ENCODE measurements at regions of chr1 and their contacts with region 1.

Region 1: DNA sequence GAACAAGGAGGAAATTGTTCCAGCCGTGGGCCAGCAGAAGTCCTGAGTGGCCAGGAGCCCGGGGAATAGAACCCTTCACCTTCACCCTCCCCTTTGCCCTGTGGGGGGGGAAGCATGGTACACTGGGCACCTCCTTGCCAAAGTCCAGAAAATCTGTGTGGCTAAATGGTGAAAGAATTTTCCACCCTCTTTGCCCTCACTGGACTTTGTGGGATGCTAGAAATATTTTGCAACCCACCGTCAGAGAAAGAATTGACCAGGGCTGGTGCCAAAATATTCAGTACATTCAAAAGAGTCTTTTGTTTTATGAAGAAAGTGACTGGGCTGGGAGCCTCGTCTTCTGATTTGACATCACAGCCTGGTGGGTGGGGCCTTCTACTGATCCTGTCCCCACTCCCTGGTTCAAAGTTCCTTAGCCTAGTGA is 14.6 kb downstream of the NFASC start:
- DNase-seq: no peak
- H3K4me3 ChIP-seq: no peak overlapping the region
- H3K27ac ChIP-seq: no peak overlapping the region
- H3K4me1 ChIP-seq: peaks cover 0 to 10% of the 10 kb centered on the region in 2 donors
- H3K27me3 ChIP-seq: no peaks in the 10 kb centered on the region
- CTCF ChIP-seq: no peak

Region 2: GRCh38 chr1:203839059-203839458 is 1046.2 kb before region 1 on chr1:
- intact Hi-C with region 1: no loop called
- DNase-seq: no peak
- H3K4me3 ChIP-seq: no peak overlapping the region
- H3K27ac ChIP-seq: no peak overlapping the region
- H3K4me1 ChIP-seq: peaks cover 0 to 6% of the 10 kb centered on the region in 2 donors
- H3K27me3 ChIP-seq: no peaks in the 10 kb centered on the region
- CTCF ChIP-seq: no peak

Region 3: GRCh38 chr1:204819495-204819894 is 65.8 kb before region 1 on chr1:
- intact Hi-C with region 1: loop called (anchors 5 kb)
- DNase-seq: no peak
- H3K4me3 ChIP-seq: no peak overlapping the region
- H3K27ac ChIP-seq: peak overlapping the region; percentile 32 to 47
- H3K4me1 ChIP-seq: peaks cover 7 to 34% of the 10 kb centered on the region in 2 donors
- H3K27me3 ChIP-seq: no peaks in the 10 kb centered on the region
- CTCF ChIP-seq: no peak

Region 4: DNA sequence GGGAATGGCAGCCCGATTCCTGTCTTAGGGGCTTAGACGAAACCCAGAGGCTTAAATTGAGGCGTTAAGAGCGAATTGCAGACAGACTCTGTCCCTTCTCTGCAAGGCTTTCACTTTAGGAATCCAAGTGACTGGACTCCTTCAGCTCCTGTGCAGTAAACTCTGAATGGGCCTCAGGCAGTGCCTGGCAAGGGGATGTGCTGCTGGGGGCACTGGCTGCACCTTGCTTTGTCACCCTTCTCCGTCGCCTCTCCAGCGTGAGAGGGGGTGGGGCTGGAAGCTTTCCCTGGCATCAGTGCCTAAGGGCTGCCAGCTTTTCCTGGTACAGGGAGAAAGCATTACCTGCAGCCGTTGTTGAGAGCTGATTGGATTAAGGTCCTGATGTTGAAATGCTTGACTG is 54.6 kb before region 1 on chr1:
- intact Hi-C with region 1: loop called (anchors 5 kb)
- DNase-seq: no peak
- H3K4me3 ChIP-seq: no peak overlapping the region
- H3K27ac ChIP-seq: no peak overlapping the region
- H3K4me1 ChIP-seq: peaks cover 0 to 8% of the 10 kb centered on the region in 2 donors
- H3K27me3 ChIP-seq: no peaks in the 10 kb centered on the region
- CTCF ChIP-seq: no peak

Region 5: GRCh38 chr1:204842892-204843291 is 42.4 kb before region 1 on chr1:
- intact Hi-C with region 1: no loop called
- DNase-seq: no peak
- H3K4me3 ChIP-seq: no peak overlapping the region
- H3K27ac ChIP-seq: no peak overlapping the region
- H3K4me1 ChIP-seq: no peaks in the 10 kb centered on the region
- H3K27me3 ChIP-seq: no peaks in the 10 kb centered on the region
- CTCF ChIP-seq: no peak

Region 6: GRCh38 chr1:204902671-204903070 is 17.4 kb after region 1 on chr1:
- intact Hi-C with region 1: no loop called
- DNase-seq: no peak
- H3K4me3 ChIP-seq: no peak overlapping the region
- H3K27ac ChIP-seq: no peak overlapping the region
- H3K4me1 ChIP-seq: no peaks in the 10 kb centered on the region
- H3K27me3 ChIP-seq: no peaks in the 10 kb centered on the region
- CTCF ChIP-seq: no peak

Region 7: DNA sequence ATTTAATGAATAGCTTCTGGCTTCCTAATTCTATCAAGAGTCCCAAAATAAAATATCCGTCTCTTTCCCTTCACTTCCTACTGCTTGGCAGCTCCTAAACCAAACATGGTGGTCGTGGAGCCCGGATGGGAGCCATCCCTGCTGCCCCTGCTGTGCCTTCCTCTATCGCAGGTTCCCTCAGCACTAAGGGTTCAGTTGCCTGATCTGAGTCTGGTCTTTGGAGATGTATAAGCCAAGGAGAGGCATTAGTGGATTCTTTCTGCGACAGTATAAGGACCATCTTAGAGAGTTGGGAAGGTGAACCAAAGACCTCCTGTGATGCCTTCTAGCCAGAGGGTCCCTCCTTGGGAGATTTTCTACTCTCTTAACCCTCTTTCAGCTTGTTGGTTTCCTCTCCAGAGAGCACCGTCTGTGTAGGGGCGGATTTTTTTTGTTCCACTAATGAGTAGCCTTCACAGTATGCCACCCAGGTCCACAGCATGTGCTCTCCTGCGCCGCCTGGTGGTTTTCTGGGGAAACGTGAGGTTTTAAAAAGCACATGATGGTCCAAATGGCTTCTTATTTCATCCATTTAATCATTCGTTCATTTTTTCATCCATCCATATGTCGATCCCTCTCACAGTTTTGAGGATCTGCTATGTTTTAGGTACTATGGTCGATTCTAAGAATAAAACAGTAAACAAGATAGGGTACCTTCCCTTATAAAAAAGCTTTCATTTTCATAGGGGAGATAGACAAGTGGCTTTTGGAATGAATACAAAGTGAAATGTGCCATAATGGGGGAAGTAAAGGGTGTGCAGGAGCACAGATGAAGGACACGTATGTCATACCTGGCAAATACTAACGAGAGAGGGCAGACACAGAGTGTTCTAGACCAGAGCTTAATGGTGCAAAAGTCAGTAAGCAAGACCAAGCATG is 56.4 kb after region 1 on chr1:
- intact Hi-C with region 1: loop called (anchors 5 kb)
- DNase-seq: peak in 1 of 2 donors; percentile 73
- H3K4me3 ChIP-seq: no peak overlapping the region
- H3K27ac ChIP-seq: no peak overlapping the region
- H3K4me1 ChIP-seq: no peaks in the 10 kb centered on the region
- H3K27me3 ChIP-seq: no peaks in the 10 kb centered on the region
- CTCF ChIP-seq: peak; percentile 71 to 84 (median 74)

Measured in ascending aorta (tissue), 2 donors.